Adrenal gland (tissue), 19 donors: ENCODE measurements at regions of chr6 and their contacts with region 1.

Region 1: DNA sequence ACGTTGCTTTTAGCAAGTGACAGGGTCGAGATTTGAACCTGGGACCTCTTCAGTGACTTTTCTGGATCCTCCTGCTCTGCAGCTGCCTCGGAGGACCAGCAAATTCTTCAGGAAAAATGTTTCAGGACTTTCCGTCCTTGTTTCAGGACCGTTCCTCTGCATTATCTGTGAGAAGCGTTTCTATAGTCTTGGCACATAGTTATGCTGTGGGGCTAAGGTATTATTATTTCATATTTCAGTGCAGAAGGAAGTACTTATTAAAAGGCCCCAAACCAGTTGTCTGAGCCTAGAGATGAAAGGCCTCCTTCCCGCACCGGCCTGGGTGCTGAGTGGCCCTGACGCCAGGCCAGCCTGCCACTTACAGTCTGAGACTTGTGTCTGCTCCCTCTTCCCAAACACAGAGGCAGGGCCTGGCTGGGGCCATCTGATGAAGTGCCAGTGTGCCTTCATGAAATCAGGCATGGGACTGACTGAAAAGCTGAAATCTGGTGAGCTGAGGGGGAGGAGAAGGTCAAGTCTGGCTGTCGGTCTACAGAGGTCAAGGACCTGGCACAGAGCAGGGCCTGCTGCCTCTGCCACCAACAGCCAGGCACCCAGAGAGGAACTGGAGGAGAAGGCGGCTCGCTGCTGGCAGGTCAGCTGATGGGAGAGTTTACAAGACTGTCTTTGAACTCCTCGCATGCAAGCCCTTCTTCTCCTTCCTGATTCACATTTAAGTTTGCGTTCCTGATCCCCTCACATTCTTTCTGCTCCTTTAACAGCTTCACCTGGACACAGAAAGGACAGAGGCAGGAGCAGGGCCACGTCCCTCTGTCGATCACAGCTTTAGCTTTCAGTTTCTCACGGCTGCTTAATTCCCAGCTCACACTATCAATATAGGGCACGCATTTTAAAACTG is 8.9 kb upstream of the QKI start:
- DNase-seq: peak; percentile 62 to 88 (median 85)
- H3K4me3 ChIP-seq: peak overlapping the region in 2 of 4 donors; percentile 8 to 30
- H3K27ac ChIP-seq: peak overlapping the region; percentile 80 to 95 (median 89)
- H3K4me1 ChIP-seq: peaks cover 23 to 44% of the 10 kb centered on the region in 2 donors
- H3K27me3 ChIP-seq: no peaks in the 10 kb centered on the region
- CTCF ChIP-seq: no peak
- POLR2A ChIP-seq: peak; percentile 51 to 69

Region 2: GRCh38 chr6:163355426-163355991 is 50.2 kb before region 1 on chr6:
- intact Hi-C with region 1: loop called (anchors 5 to 10 kb)
- DNase-seq: peak; percentile 54 to 84 (median 72)
- H3K4me3 ChIP-seq: no peak overlapping the region
- H3K27ac ChIP-seq: peak overlapping the region; percentile 56 to 87 (median 75)
- H3K4me1 ChIP-seq: peaks cover 26 to 34% of the 10 kb centered on the region in 2 donors
- H3K27me3 ChIP-seq: no peaks in the 10 kb centered on the region
- CTCF ChIP-seq: no peak
- POLR2A ChIP-seq: peak in 1 of 2 donors; percentile 51

Region 3: GRCh38 chr6:163716690-163717089 is 311.0 kb after region 1 on chr6:
- intact Hi-C with region 1: no loop called
- DNase-seq: no peak
- H3K4me3 ChIP-seq: no peak overlapping the region
- H3K27ac ChIP-seq: no peak overlapping the region
- H3K4me1 ChIP-seq: no peaks in the 10 kb centered on the region
- H3K27me3 ChIP-seq: no peaks in the 10 kb centered on the region
- CTCF ChIP-seq: no peak
- POLR2A ChIP-seq: no peak